Body of pancreas (tissue), 4 donors: ENCODE measurements at regions of chr1 and their contacts with region 1.

Region 1: DNA sequence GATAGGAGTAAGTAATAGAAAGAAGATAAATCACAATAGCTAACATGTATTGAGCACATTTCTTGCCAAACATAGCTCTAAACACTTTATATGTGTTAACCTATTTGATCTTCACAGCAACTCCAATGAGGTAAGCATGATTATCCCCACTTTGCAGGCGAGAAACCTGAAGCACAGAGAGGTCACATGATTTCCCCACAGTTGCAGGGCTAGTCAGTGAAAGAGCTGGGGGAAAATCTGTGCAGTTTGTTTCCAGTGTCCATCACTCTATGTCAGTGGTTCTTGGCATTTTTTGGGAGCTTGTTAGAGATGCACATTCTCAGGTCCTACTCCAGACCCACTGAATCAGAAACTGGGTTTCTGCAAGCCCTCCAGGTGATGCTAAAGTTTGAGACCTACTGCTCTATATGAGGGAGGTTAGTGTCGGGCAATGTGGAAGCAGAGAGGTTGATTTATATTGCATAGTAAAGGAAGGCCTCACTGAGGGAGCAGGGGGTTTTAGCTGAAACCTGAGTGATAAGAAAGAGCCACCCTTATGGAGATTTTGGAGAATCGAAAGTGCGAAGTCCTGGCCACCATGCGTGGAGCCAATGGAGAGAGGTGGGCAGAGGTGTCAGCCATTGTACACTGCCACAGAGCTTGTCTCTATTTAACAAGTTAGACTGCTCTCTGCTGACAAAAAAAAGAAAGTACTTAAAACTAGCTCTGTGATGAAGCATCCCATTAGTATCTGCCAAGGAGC is 20.9 kb downstream of the MCOLN3 start:
- DNase-seq: no peak
- ATAC-seq: no peak
- H3K4me3 ChIP-seq: no peak overlapping the region
- H3K27ac ChIP-seq: no peak overlapping the region
- H3K4me1 ChIP-seq: no peaks in the 10 kb centered on the region
- H3K27me3 ChIP-seq: no peaks in the 10 kb centered on the region
- CTCF ChIP-seq: no peak
- POLR2A ChIP-seq: no peak

Region 2: DNA sequence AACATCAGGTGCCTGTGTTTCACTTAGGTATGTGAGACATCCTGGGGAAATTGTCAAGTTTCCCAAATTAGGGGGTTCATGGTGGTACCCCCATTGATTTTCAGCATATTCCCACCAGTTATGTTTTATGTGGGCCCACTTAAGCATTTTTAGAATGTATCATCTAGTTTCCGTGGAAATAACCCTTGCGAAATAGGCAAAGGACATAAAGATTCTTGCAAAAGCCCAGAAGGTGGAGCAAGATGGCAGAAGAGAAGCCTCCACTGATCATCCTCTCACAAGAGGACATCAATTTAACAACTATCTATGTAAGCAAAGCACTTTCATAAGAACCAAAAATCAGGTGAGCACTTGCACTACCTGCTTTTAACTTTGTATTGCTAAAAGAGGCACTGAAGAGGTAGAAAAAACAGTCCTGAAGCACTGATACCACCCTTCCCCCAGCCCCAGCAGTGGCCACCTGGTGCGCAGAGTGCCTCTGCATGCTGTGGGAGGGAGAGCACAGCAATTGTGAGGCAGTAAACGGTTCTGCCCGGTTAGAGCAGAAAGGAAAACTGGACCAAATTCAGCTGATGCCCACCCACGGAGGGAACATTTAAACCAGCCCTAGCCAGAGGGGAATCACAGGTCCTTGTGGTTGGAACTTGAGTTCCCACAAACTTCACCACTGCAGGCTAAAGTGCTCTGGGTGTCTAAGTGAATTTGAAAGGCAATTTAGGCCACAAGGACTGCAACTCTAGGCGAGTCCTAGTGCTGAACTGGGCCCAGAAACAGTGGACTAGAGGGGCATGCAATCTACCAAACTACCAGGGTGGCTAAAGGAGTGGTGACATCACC is 53.7 kb before region 1 on chr1:
- intact Hi-C with region 1: loop called (anchors 10 kb)
- DNase-seq: no peak
- ATAC-seq: no peak
- H3K4me3 ChIP-seq: no peak overlapping the region
- H3K27ac ChIP-seq: no peak overlapping the region
- H3K4me1 ChIP-seq: no peaks in the 10 kb centered on the region
- H3K27me3 ChIP-seq: no peaks in the 10 kb centered on the region
- CTCF ChIP-seq: no peak
- POLR2A ChIP-seq: no peak